Activated CD4-positive, alpha-beta memory T cell treated with anti-CD3 and anti-CD28 coated beads for 36 hours (primary cell): ENCODE measurements at regions of chr12 and their contacts with region 1.

Region 1: DNA sequence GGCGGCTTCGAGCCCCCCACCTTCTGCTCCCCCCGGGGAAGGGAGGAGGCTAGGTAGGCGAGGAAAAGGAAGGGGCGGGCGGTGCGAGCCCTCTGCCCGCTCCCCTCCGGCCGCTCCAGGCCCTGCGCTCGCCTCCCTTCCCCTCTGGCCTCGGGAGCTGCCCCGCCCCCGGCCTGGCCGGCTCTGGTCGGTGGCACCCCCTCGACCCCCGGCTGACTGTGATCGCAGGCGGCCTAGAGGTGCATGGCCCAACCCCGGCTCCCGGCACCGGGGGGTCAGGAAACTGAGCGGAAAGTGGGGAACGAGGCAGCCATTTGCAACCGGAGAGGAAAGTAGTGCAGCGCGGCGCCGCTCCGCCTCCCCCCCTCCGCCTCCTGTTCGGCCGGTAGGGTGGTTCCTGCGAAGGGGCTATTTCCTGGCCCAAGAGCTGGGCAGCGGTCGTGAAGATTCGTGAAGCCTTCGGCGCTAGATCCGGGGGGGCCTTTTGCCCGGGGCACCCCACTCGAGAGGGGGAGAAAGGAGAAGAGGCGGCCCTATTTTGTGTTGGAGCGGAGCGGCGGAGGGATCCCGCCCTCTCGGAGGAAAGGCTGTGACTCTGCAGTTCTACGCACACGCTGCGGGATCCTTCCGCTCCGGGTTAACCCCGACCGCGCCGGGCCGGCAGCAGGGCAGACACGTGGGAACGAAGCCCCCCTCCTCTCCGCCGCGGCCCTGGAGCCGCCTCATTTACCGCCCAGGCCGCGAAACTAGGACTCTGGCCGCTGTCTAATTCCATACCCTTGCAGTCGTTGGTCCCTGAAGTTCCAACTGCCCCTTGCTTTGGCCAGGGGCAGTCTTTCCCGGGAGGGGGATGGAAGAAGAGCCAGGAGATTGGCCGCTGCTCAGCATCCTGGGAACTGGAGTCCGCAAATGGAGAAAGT is at the start of gene KMT2D:
- DNase-seq: peak; percentile 91
- H3K4me3 Mint-ChIP-seq: peak within 1 kb of the TSS; percentile 94
- H3K27ac Mint-ChIP-seq: peak within 1 kb of the TSS; percentile 96
- H3K4me1 Mint-ChIP-seq: peaks cover 43% of the 10 kb centered on the region
- H3K27me3 Mint-ChIP-seq: no peaks in the 10 kb centered on the region
- total RNA-seq, gene KMT2D: 47.9 to 49.0 TPM

Region 2: DNA sequence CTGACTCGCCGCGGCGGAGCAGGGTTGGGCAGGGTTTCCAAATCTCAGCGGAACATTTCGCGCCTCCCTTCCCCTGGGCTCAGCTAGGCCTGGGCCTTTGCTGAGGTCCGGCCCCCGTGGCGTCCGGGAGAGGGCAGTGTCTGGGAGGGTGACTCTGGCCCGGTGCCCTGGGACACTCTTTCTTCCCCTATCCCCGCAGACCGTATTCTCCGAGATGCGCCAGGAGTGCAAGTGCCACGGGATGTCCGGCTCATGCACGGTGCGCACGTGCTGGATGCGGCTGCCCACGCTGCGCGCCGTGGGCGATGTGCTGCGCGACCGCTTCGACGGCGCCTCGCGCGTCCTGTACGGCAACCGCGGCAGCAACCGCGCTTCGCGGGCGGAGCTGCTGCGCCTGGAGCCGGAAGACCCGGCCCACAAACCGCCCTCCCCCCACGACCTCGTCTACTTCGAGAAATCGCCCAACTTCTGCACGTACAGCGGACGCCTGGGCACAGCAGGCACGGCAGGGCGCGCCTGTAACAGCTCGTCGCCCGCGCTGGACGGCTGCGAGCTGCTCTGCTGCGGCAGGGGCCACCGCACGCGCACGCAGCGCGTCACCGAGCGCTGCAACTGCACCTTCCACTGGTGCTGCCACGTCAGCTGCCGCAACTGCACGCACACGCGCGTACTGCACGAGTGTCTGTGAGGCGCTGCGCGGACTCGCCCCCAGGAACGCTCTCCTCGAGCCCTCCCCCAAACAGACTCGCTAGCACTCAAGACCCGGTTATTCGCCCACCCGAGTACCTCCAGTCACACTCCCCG is 79.3 kb before region 1 on chr12:
- CTCF ChIA-PET with region 1: no interaction called
- POLR2A ChIA-PET with region 1: no interaction called
- intact Hi-C with region 1: no loop called
- DNase-seq: peak; percentile 52
- H3K4me3 Mint-ChIP-seq: peak overlapping the region; percentile 44
- H3K27ac Mint-ChIP-seq: peak overlapping the region; percentile 19
- H3K4me1 Mint-ChIP-seq: peaks cover 52% of the 10 kb centered on the region
- H3K27me3 Mint-ChIP-seq: peaks cover 48% of the 10 kb centered on the region

Region 3: DNA sequence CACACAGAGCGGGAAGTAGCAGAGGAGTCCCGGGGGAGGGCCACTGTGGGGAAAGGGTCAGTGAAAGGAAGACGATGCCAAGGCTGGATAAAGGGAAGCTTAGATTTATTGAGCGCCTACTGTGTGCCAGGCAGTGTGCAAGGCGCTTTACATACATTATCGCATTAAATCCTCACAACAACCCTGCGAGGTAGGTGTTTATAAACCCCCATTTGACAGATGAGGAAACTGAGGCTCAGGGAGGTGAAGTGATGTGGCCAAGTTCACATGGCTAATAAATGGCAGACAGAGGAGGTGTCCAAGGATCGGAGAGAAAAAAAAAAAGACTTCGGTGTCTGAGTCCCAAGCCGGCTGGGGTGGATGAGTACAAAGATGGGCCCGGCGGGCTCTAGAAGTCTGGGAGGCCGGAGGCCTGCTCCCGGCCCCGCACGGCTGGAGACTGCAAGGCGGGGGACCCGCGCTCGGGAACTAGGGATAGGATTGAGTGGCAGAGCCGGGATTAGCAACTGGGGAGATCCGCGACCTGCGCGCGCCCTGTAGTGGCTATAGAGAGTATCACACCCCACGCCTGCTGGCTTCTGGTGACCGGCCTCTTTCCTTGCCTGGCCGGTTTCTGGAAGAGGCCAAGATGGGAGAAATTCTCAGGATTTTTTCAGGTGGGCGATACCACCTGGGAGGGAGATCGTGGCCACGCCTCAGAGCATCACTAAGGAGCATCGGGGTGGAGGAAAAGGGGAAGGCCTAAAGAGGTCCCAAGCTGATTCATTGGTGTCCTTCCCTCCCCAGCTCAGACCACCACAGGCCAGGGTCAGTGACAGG is 65.2 kb before region 1 on chr12:
- CTCF ChIA-PET with region 1: interaction called, 11 read pairs
- POLR2A ChIA-PET with region 1: no interaction called
- intact Hi-C with region 1: no loop called
- DNase-seq: peak; percentile 72
- H3K4me3 Mint-ChIP-seq: no peak overlapping the region
- H3K27ac Mint-ChIP-seq: no peak overlapping the region
- H3K4me1 Mint-ChIP-seq: peaks cover 32% of the 10 kb centered on the region
- H3K27me3 Mint-ChIP-seq: peaks cover 37% of the 10 kb centered on the region

Region 4: GRCh38 chr12:49037111-49037946 is 23.2 kb before region 1 on chr12:
- CTCF ChIA-PET with region 1: interaction called, 10 read pairs
- POLR2A ChIA-PET with region 1: interaction called, 4 read pairs
- intact Hi-C with region 1: no loop called
- DNase-seq: no peak
- H3K4me3 Mint-ChIP-seq: no peak overlapping the region
- H3K27ac Mint-ChIP-seq: no peak overlapping the region
- H3K4me1 Mint-ChIP-seq: no peaks in the 10 kb centered on the region
- H3K27me3 Mint-ChIP-seq: no peaks in the 10 kb centered on the region

Region 5: GRCh38 chr12:49098035-49098451 is 37.5 kb after region 1 on chr12:
- CTCF ChIA-PET with region 1: interaction called, 256 read pairs
- POLR2A ChIA-PET with region 1: interaction called, 7 read pairs
- intact Hi-C with region 1: no loop called
- DNase-seq: peak; percentile 73
- H3K4me3 Mint-ChIP-seq: no peak overlapping the region
- H3K27ac Mint-ChIP-seq: no peak overlapping the region
- H3K4me1 Mint-ChIP-seq: peaks cover 12% of the 10 kb centered on the region
- H3K27me3 Mint-ChIP-seq: peaks cover 20% of the 10 kb centered on the region

Region 6: GRCh38 chr12:49130151-49131050 is 69.9 kb after region 1 on chr12:
- CTCF ChIA-PET with region 1: interaction called, 13 read pairs
- POLR2A ChIA-PET with region 1: interaction called, 5 read pairs
- intact Hi-C with region 1: loop called (anchors 5 kb)
- DNase-seq: peak; percentile 96
- H3K4me3 Mint-ChIP-seq: peak overlapping the region; percentile 97
- H3K27ac Mint-ChIP-seq: peak overlapping the region; percentile 99
- H3K4me1 Mint-ChIP-seq: peaks cover 46% of the 10 kb centered on the region
- H3K27me3 Mint-ChIP-seq: peaks cover 7% of the 10 kb centered on the region

Region 7: GRCh38 chr12:49232940-49233841 is 172.7 kb after region 1 on chr12:
- CTCF ChIA-PET with region 1: interaction called, 15 read pairs
- POLR2A ChIA-PET with region 1: no interaction called
- intact Hi-C with region 1: loop called (anchors 5 kb)
- DNase-seq: no peak
- H3K4me3 Mint-ChIP-seq: no peak overlapping the region
- H3K27ac Mint-ChIP-seq: no peak overlapping the region
- H3K4me1 Mint-ChIP-seq: peaks cover 16% of the 10 kb centered on the region
- H3K27me3 Mint-ChIP-seq: no peaks in the 10 kb centered on the region